Mammary epithelial cell (primary cell): ENCODE measurements at regions of chr6 and their contacts with region 1.

Region 1: DNA sequence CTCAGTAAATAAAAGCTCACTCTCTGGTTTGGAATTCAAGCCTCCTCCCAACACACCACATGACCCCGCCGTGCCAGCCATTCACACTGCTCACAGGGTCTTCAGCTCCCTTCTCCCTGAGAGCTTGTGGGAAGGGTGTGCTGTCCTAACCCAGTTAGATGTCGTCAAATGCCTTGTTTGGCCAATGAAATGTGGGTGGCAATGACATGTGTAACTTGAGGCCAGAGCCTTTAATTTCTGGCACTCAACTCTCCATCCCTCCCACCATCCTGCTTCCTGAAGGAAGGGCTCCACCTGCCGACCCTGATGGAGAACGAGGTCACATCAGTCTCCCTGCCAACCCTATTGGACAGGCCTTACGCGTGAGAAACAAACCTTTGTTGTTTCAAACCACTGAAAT is 224.5 kb upstream of the AGPAT4 start:
- DNase-seq: peak; percentile 61
- H3K4me3 ChIP-seq: no peak overlapping the region
- H3K27ac ChIP-seq: no peak overlapping the region
- H3K4me1 ChIP-seq: no peaks in the 10 kb centered on the region
- H3K27me3 ChIP-seq: no peaks in the 10 kb centered on the region
- CTCF ChIP-seq: peak; percentile 67 to 83

Region 2: DNA sequence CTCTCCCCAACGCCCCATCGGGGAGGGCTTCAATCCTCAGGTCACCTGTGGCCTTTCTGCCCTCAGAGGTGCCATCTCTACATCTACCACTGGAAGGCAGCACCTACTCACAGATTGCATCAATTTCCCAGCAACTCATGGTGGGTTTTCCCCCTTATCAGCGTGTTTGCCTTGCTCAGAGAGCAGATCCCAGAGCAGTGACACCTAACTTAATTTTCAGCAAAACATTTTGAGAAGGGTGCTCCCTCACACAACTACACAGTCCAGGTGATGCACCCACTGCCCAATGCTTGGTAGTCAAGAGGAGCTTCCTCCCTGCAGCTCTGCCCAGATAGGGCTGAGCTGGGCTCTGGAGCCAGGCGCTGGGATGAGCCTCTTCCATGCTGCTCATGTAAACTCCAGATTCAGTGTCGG is 748.1 kb before region 1 on chr6:
- CTCF ChIA-PET with region 1: no interaction called
- dilution Hi-C with region 1: no loop called
- in situ Hi-C with region 1: no loop called
- intact Hi-C with region 1: loop called (anchors 1 kb)
- DNase-seq: peak; percentile 25
- H3K4me3 ChIP-seq: no peak overlapping the region
- H3K27ac ChIP-seq: no peak overlapping the region
- H3K4me1 ChIP-seq: no peaks in the 10 kb centered on the region
- H3K27me3 ChIP-seq: no peaks in the 10 kb centered on the region
- CTCF ChIP-seq: peak; percentile 85 to 86

Region 3: GRCh38 chr6:161418463-161418945 is 79.9 kb before region 1 on chr6:
- CTCF ChIA-PET with region 1: interaction called, 8 read pairs
- dilution Hi-C with region 1: no loop called
- in situ Hi-C with region 1: loop called in 1 of 2 experiments (anchors 5 kb)
- intact Hi-C with region 1: loop called (anchors 1 kb)
- DNase-seq: peak; percentile 61
- H3K4me3 ChIP-seq: no peak overlapping the region
- H3K27ac ChIP-seq: no peak overlapping the region
- H3K4me1 ChIP-seq: peaks cover 3% of the 10 kb centered on the region
- H3K27me3 ChIP-seq: no peaks in the 10 kb centered on the region
- CTCF ChIP-seq: peak; percentile 60 to 67

Region 4: DNA sequence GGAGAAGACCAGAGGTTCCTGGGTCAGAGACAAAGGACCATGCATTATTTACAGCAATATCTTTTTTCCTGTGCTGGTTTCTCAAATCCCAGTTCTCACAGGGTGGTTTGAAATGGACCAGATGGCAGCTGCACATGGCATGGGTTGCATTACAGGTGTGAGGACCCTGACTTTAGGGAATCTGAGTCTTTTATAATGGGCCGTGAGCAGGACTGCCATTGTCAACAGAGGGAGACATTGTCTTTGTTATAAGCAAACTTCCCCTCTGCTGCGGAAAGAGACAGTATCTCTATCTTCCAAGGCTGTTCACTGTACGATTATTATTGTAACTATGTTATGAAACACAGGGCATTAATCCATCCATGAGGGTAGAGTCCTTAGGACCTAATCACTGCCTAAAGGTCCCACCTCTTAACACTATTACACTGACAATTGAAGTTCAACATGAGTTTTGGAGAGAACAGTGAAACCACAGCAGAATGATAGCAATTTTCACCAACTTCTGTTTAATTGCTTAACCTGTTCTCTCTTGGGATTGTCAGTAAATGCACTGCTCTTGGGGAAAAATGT is 68.4 kb before region 1 on chr6:
- CTCF ChIA-PET with region 1: no interaction called
- dilution Hi-C with region 1: no loop called
- in situ Hi-C with region 1: no loop called
- intact Hi-C with region 1: loop called (anchors 1 kb)
- DNase-seq: no peak
- H3K4me3 ChIP-seq: no peak overlapping the region
- H3K27ac ChIP-seq: no peak overlapping the region
- H3K4me1 ChIP-seq: peaks cover 16% of the 10 kb centered on the region
- H3K27me3 ChIP-seq: no peaks in the 10 kb centered on the region
- CTCF ChIP-seq: peak; percentile 10 to 25